GM12878 (cell line): ENCODE measurements at regions of chr7 and their contacts with region 1.

Region 1: DNA sequence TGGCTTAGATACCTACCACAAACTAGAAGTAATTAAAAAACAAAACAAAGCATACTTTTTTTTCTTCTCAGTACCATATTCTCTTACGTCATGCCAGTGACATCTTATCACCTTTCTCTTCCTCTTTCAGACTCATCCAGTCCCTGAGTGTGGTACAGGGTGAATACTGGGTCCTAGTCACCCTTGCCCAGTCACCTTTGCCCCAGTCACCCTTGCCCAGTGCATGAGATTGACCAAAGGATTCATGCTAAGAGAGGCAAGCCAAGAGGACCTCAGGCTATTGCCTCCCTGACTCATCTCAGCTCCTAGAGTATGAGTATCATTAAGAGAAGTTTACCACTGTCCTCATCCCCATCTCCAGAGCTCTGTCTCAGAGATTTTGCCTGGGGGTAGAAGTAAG is 10.0 kb upstream of the TSPAN12 start:
- DNase-seq: no peak
- ATAC-seq: peak; percentile 91
- H3K4me3 ChIP-seq: no peak overlapping the region
- H3K27ac ChIP-seq: no peak overlapping the region
- H3K4me1 ChIP-seq: peaks cover 17% of the 10 kb centered on the region
- H3K27me3 ChIP-seq: no peaks in the 10 kb centered on the region
- CTCF ChIP-seq: no peak
- EP300 ChIP-seq: 0 out of 4 replicates have a peak, but pooled peaks of 1 of the 2 experiments have one; percentile 52
- POLR2A ChIP-seq: no peak
- RAD21 ChIP-seq: no peak

Region 2: GRCh38 chr7:120131096-120131839 is 736.7 kb before region 1 on chr7:
- CTCF ChIA-PET with region 1: no interaction called
- POLR2A ChIA-PET with region 1: no interaction called
- RAD21 ChIA-PET with region 1: no interaction called
- SMC1A ChIA-PET with region 1: no interaction called
- in situ Hi-C with region 1: no loop called
- intact Hi-C with region 1: no loop called
- DNase-seq: no peak
- ATAC-seq: no peak
- H3K4me3 ChIP-seq: no peak overlapping the region
- H3K27ac ChIP-seq: no peak overlapping the region
- H3K4me1 ChIP-seq: no peaks in the 10 kb centered on the region
- H3K27me3 ChIP-seq: no peaks in the 10 kb centered on the region
- CTCF ChIP-seq: no peak
- EP300 ChIP-seq: no peak
- POLR2A ChIP-seq: no peak
- RAD21 ChIP-seq: no peak

Region 3: DNA sequence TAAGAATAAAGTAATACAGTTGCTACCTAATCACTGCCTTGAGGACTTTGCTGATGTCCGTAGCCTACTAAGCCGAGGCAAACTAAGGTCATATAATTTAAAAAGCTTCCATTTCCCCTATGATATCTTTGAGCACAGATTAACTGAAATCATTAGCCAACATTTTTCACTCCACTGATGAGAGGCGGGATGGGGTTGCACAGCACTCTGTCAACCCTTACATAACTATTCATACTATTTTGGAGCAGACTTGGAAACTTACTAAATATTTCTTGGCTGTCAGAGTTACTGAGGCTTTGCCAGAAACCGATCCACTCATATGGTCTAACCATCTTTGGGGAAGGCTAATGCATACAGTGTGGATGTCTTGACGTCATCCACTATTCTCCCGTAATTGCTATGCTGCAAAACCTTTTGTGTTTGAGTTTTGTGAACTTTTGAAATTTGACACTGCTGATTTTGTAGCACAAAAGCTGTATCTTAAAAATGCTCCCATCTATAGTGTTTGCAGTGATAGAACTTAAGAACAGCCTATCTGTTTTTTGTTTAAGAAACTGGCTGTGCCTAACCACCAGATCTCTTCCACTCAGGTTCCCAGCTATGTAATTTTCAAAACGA is 258.7 kb before region 1 on chr7:
- CTCF ChIA-PET with region 1: no interaction called
- POLR2A ChIA-PET with region 1: no interaction called
- RAD21 ChIA-PET with region 1: no interaction called
- SMC1A ChIA-PET with region 1: no interaction called
- in situ Hi-C with region 1: no loop called
- intact Hi-C with region 1: no loop called
- DNase-seq: no peak
- ATAC-seq: no peak
- H3K4me3 ChIP-seq: no peak overlapping the region
- H3K27ac ChIP-seq: no peak overlapping the region
- H3K4me1 ChIP-seq: no peaks in the 10 kb centered on the region
- H3K27me3 ChIP-seq: no peaks in the 10 kb centered on the region
- CTCF ChIP-seq: no peak
- EP300 ChIP-seq: no peak
- POLR2A ChIP-seq: no peak
- RAD21 ChIP-seq: no peak

Region 4: DNA sequence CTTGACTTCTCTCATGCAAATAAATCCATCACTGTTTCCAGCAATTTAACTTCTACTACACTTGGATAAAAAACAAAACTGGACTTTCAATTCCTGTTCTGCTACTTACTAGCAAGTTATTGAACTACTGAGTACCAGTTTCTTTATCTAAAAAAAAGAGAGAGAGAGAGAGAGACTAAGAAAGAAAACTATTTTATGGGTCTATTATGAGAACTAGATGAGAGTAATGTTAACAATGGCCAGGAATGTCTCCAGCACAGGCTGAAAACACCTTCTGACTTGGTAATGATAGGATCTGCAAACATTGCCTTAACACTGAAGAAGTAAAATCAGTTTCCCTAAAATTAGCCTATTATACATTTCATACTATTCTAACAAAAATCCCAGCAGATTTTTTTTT is 15.2 kb before region 1 on chr7:
- CTCF ChIA-PET with region 1: interaction called, 3 read pairs
- POLR2A ChIA-PET with region 1: interaction called, 5 read pairs
- RAD21 ChIA-PET with region 1: interaction called, 13 read pairs
- SMC1A ChIA-PET with region 1: interaction called, 16 read pairs
- in situ Hi-C with region 1: no loop called
- intact Hi-C with region 1: no loop called
- DNase-seq: no peak
- ATAC-seq: no peak
- H3K4me3 ChIP-seq: no peak overlapping the region
- H3K27ac ChIP-seq: no peak overlapping the region
- H3K4me1 ChIP-seq: no peaks in the 10 kb centered on the region
- H3K27me3 ChIP-seq: no peaks in the 10 kb centered on the region
- CTCF ChIP-seq: no peak
- EP300 ChIP-seq: no peak
- POLR2A ChIP-seq: no peak
- RAD21 ChIP-seq: no peak

Region 5: DNA sequence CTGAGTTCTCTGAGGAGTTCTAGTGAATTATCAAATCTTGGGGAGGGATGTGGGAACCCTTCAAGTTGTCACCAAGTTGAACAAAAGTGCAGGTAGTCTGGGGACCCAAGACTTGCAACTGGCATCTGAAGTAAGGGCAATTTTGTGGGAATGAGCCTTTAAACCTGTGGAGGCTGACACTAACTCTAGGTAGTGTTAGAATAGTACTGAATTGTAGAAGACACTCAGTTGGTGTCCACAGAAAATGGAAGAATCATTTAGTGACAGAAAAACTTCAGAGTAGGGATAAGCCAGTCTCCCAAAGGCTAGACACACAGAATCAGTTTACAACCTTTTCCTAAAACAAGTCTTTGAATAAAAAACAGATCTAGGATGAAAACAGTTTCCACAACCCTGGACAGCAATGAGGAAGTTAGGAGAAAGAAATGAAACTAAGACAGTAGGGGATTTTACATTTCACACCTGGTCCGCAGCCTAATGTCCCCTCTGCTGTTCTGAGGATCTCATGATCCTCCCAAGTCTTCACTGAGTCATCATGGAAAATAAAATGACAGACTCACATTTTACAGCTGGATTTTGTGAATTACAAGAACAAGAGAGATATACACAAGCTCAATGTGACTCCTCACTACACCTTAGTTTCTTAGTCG is 59.6 kb after region 1 on chr7:
- CTCF ChIA-PET with region 1: interaction called, 6 read pairs
- POLR2A ChIA-PET with region 1: interaction called, 5 read pairs
- RAD21 ChIA-PET with region 1: interaction called, 5 read pairs
- SMC1A ChIA-PET with region 1: interaction called, 9 read pairs
- in situ Hi-C with region 1: no loop called
- intact Hi-C with region 1: loop called (anchors 5 kb)
- DNase-seq: peak; percentile 46
- ATAC-seq: peak; percentile 90
- H3K4me3 ChIP-seq: no peak overlapping the region
- H3K27ac ChIP-seq: peak overlapping the region; percentile 46; the same call in 1 of the 2 replicates
- H3K4me1 ChIP-seq: peaks cover 4% of the 10 kb centered on the region; the same call in 1 of the 2 replicates
- H3K27me3 ChIP-seq: no peaks in the 10 kb centered on the region
- CTCF ChIP-seq: no peak
- EP300 ChIP-seq: 0 out of 4 replicates have a peak, but pooled peaks of 1 of the 2 experiments have one; percentile 40
- POLR2A ChIP-seq: no peak
- RAD21 ChIP-seq: no peak

Region 6: DNA sequence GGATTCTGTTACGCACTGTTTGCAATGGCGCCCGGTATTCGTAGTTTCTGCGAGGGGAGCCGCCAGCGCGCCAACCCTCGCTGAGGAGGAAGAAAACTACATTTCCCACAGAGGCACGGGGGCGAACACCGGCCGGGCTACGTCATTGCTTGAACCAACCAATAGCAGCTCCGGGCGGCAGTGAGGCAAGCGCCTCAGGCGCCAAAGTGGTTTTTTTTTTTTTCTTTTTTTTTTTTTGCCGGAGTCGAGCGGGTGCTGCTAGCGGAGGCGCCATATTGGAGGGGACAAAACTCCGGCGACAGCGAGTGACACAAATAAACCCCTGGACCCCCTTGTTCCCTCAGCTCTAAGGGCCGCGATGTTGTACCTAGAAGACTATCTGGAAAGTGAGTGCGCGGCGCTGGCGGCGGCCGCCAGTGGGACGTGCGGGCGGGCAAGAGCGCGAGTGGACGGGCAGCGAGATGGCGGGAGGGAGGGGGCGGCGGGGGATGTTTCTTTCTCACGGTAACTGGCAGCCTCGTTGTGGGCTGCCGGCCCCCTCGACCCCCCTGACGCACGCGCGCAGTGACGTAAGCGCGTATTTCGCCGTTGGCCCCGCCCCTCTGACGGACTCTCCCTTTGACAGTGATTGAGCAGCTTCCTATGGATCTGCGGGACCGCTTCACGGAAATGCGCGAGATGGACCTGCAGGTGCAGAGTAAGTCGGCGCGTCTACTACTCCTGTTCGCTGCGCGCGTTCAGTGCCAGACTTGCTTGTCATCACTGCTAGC is 82.8 kb after region 1 on chr7 and contains the start of gene ING3:
- CTCF ChIA-PET with region 1: no interaction called
- POLR2A ChIA-PET with region 1: interaction called, 12 read pairs
- RAD21 ChIA-PET with region 1: interaction called, 3 read pairs
- SMC1A ChIA-PET with region 1: interaction called, 4 read pairs
- in situ Hi-C with region 1: no loop called
- intact Hi-C with region 1: no loop called
- DNase-seq: peak; percentile 92
- ATAC-seq: peak; percentile 93
- H3K4me3 ChIP-seq: peak within 1 kb of the TSS; percentile 90
- H3K27ac ChIP-seq: peak within 1 kb of the TSS; percentile 97
- H3K4me1 ChIP-seq: 0 out of 2 replicates have a peak, but pooled peaks cover 5% of the 10 kb centered on the region
- H3K27me3 ChIP-seq: no peaks in the 10 kb centered on the region
- CTCF ChIP-seq: no peak
- EP300 ChIP-seq: 0 out of 4 replicates have a peak, but pooled peaks of 1 of the 2 experiments have one; percentile 15
- POLR2A ChIP-seq: peak; percentile 89
- RAD21 ChIP-seq: no peak
- polyA plus RNA-seq, gene ING3: 44.3 to 60.8 TPM

Region 7: DNA sequence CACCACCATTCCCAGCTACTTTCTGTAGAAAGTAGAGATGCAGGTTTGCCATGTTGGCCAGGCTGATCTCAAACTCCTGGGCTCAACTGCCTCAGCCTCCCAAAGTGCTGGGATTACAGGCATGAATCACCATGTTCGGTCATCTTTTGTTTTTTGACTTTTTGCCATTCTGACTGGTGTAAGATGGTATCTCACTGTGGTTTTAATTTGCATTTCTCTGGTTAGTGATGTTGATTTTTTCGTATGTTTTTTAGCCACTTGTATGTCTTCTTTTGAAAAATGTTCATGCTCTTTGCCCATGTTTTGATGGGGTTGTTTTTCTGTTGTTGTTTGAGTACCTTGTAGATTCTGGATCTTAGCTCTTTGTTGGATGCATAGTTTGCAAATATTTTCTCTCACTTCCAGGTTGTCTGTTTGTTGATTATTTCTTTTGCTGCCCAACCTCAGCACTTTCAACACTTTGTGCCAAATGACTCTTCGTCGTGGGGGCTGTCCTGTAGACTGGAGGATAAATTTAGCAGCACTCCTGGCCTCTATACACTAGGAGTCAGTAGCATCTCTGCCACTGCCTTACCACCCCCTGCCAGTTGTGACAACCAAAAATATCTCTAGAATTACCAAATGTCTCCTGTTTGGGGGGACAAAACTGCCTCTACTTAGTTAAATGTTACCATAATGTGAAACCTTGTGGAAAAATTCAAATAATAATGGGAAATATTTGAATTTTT is 114.1 kb after region 1 on chr7:
- CTCF ChIA-PET with region 1: no interaction called
- POLR2A ChIA-PET with region 1: no interaction called
- RAD21 ChIA-PET with region 1: no interaction called
- SMC1A ChIA-PET with region 1: no interaction called
- in situ Hi-C with region 1: no loop called
- intact Hi-C with region 1: no loop called
- DNase-seq: no peak
- ATAC-seq: peak; percentile 75
- H3K4me3 ChIP-seq: no peak overlapping the region
- H3K27ac ChIP-seq: no peak overlapping the region
- H3K4me1 ChIP-seq: no peaks in the 10 kb centered on the region
- H3K27me3 ChIP-seq: no peaks in the 10 kb centered on the region
- CTCF ChIP-seq: no peak
- EP300 ChIP-seq: no peak
- POLR2A ChIP-seq: no peak
- RAD21 ChIP-seq: no peak

Region 8: DNA sequence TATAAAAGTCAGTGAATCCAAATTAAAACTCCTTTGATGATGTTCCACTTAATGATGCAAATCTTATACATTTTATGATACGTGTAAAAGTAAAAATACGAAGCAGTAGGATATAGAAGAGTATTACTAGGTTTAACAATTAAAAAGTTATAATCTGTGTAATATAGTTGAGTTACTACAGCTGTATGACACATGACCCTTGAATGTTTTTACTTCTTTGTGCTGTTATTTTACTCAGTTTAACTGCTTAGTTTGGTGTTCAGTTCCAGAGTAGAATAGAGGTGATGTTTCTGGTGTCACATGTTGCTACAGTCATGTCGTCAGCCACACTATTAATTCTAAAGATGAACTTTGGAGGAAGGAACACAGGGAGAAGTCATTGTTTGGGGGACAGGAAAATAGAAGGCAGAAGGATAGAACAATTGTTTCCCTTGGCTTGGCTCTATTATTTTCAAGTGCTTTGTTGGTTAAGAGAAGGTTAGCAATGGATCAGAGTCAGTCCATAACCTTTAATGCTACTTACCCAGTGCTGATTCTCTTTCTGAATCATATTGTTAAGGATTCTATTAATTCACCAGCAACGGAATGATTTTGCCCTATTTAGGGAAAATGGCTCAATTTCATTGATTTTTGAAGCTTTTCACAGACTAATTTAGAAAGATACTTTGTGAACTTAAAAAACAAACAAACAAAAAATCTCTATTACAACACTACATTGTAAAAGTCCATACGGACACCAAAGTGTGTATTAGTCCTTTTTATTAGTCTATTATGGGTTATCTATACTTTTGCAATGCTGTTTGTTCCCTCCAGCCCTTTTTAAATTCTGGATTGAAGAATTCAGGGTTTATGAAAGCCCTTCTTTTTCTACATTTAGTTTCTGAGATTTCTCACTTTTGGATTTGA is 194.0 kb after region 1 on chr7:
- CTCF ChIA-PET with region 1: no interaction called
- POLR2A ChIA-PET with region 1: no interaction called
- RAD21 ChIA-PET with region 1: no interaction called
- SMC1A ChIA-PET with region 1: no interaction called
- in situ Hi-C with region 1: no loop called
- intact Hi-C with region 1: no loop called
- DNase-seq: no peak
- ATAC-seq: no peak
- H3K4me3 ChIP-seq: no peak overlapping the region
- H3K27ac ChIP-seq: no peak overlapping the region
- H3K4me1 ChIP-seq: no peaks in the 10 kb centered on the region
- H3K27me3 ChIP-seq: peaks cover 0 to 1% of the 10 kb centered on the region in 2 experiments; a peak in 1 of 4 replicates
- CTCF ChIP-seq: no peak
- EP300 ChIP-seq: no peak
- POLR2A ChIP-seq: no peak
- RAD21 ChIP-seq: no peak